ENCODE measurements at regions of chr16 and their contacts with region 1.

Region 1: DNA sequence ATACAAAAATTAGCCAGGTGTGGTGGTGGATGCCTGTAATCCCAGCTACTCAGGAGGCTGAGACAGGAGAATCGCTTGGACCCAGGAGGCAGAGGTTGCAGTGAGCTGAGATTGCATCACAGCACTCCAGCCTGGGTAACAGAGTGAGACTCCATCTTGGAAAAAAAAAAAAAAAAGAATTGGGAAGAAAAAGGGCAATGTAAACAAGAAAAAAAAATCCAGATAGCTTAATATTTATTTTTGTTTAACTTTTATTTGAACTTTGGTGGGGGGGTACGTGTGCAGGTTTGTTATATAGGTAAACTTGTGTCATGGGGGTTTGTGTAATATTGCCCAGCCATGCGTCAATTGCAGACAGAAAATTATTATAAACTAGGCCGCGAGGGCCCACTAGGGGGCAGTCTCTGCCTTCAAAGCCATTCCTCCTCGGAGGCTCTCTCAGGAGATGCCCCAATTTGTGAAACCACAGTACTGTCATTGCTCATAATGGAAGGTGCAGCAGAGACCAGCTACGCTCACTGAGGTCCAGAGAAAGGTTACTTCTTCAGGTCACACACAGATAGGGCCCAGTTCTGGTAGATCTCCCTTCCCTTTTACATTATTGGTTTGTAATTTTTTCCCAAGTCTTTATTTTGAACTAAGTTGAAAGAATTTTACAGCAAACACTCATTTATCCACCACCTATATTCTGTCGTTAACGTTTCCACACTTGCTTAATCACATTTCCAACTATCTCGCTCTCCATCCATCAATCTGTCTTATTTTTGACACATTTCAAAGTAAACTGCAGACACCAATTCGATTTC is 206.2 kb downstream of the PRKCB start:
- DNase-seq: peak; percentile 83
- ATAC-seq: peak; percentile 37
- H3K4me3 Mint-ChIP-seq: no peak overlapping the region
- H3K27ac Mint-ChIP-seq: no peak overlapping the region
- H3K4me1 Mint-ChIP-seq: peaks cover 21% of the 10 kb centered on the region
- H3K27me3 Mint-ChIP-seq: no peaks in the 10 kb centered on the region
- CTCF ChIP-seq: peak; percentile 79

Region 2: DNA sequence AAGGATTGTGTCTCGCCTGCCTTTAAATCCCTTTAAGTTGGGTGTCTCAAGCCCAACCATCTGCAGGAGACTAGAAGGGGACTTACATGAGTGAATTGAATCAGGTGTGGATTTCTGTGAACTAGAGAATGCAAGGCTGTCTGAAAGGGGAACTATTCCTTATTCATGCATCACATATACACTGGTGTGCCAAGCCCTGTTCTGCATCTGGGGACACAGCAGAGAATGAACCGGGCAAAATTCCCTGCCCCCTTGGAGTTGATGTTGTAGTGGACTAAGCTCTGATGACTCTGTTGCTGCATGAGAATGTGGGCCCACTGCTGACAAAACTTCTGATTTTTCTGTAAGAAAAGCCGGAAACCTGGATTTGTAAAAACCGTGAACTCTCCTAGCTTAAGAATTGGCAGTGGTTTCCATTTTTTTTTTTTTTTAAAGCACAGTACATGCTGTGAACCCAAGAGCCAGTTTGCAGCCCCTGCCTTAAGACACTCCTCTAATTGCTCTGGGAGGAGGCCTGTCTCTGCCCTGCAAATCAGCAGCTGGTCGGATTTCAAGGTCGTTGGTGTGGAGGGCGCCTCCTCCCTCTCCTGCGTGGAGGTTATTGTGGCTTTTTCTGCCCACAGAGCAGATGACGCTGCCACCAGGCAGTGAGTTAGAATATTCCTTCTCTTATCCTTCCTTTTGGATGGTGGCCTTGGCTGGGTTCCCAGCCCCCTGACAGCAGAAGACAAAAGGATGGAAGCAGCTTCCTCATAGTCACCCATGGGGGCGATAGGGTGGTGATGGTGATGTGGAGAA is 75.2 kb before region 1 on chr16:
- CTCF ChIA-PET with region 1: no interaction called
- POLR2A ChIA-PET with region 1: no interaction called
- DNase-seq: no peak
- ATAC-seq: no peak; the same call in 1 of the 2 replicates
- H3K4me3 Mint-ChIP-seq: no peak overlapping the region
- H3K27ac Mint-ChIP-seq: no peak overlapping the region
- H3K4me1 Mint-ChIP-seq: peaks cover 20% of the 10 kb centered on the region
- H3K27me3 Mint-ChIP-seq: peaks cover 9% of the 10 kb centered on the region
- CTCF ChIP-seq: no peak

Region 3: DNA sequence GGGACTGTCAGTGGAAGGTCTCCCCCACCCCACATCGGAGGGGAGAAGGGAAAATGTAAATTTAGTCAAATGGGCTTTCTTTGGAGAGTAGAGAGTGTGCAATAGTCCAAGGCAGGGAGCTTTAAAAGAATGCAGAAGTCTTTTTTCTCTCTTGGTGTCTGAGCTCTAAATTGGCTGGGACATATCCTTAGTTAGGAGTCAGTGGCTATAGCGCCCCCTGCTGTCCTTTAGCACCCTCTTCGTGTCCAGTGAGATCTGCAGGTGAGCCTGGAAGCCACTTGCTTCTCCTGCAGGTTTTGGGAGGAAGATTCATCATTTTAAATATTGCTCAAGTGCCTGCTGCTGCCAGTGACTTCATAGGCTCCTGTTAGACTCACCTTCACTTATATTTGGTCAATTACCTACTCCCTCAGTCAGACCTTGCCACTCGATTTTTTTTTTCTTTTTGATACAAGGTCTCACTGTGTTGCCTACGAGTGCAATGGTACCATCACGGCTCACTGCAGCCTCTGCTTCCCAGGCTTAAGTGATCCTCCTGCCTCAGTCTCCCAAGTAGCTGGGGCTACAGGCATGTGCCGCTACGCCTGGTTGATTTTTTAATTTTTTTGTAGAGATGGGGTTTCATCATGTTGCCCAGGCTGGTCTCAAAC is 31.5 kb before region 1 on chr16:
- CTCF ChIA-PET with region 1: interaction called, 23 read pairs
- POLR2A ChIA-PET with region 1: no interaction called
- DNase-seq: peak; percentile 81
- ATAC-seq: peak; percentile 87
- H3K4me3 Mint-ChIP-seq: no peak overlapping the region
- H3K27ac Mint-ChIP-seq: no peak overlapping the region
- H3K4me1 Mint-ChIP-seq: 0 out of 2 replicates have a peak, but pooled peaks cover 3% of the 10 kb centered on the region
- H3K27me3 Mint-ChIP-seq: peaks cover 6% of the 10 kb centered on the region; the same call in 1 of the 2 replicates
- CTCF ChIP-seq: peak; percentile 89

Region 4: GRCh38 chr16:24088767-24089166 is 46.7 kb after region 1 on chr16:
- CTCF ChIA-PET with region 1: no interaction called
- POLR2A ChIA-PET with region 1: no interaction called
- DNase-seq: no peak
- ATAC-seq: no peak
- H3K4me3 Mint-ChIP-seq: no peak overlapping the region
- H3K27ac Mint-ChIP-seq: no peak overlapping the region
- H3K4me1 Mint-ChIP-seq: peaks cover 9% of the 10 kb centered on the region
- H3K27me3 Mint-ChIP-seq: no peaks in the 10 kb centered on the region
- CTCF ChIP-seq: no peak

Region 5: GRCh38 chr16:24102209-24102660 is 60.2 kb after region 1 on chr16:
- CTCF ChIA-PET with region 1: interaction called, 11 read pairs
- POLR2A ChIA-PET with region 1: no interaction called
- DNase-seq: peak; percentile 28
- ATAC-seq: peak; percentile 54
- H3K4me3 Mint-ChIP-seq: no peak overlapping the region
- H3K27ac Mint-ChIP-seq: peak overlapping the region; percentile 45; the same call in 1 of the 2 replicates
- H3K4me1 Mint-ChIP-seq: peaks cover 61% of the 10 kb centered on the region
- H3K27me3 Mint-ChIP-seq: no peaks in the 10 kb centered on the region; the same call in 1 of the 2 replicates
- CTCF ChIP-seq: no peak

Region 6: GRCh38 chr16:24253192-24253591 is 211.2 kb after region 1 on chr16:
- CTCF ChIA-PET with region 1: interaction called, 122 read pairs
- POLR2A ChIA-PET with region 1: no interaction called
- DNase-seq: peak; percentile 58
- ATAC-seq: peak; percentile 76
- H3K4me3 Mint-ChIP-seq: no peak overlapping the region
- H3K27ac Mint-ChIP-seq: no peak overlapping the region
- H3K4me1 Mint-ChIP-seq: peaks cover 28% of the 10 kb centered on the region
- H3K27me3 Mint-ChIP-seq: peaks cover 40% of the 10 kb centered on the region
- CTCF ChIP-seq: peak; percentile 79

Region 7: DNA sequence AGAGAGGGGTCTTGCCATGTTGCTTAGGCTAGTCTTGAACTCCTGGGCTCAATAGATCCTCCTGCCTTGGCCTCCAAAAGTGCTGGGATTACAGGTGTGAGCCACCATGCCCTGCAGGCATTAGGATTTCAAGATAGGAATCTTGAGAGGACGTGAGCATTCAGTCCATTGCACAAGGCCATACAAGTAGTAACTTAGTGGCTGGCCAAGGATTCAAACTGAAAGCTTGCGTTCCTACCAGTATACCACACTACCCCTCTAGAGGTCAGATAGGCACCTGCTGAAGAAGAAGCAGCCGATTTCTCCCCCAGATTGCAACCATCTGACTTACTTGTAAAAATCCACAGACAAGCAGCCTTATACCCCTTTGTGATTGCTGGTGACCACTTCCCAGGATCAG is 295.0 kb after region 1 on chr16:
- CTCF ChIA-PET with region 1: interaction called, 11 read pairs
- POLR2A ChIA-PET with region 1: no interaction called
- DNase-seq: no peak
- ATAC-seq: no peak
- H3K4me3 Mint-ChIP-seq: no peak overlapping the region
- H3K27ac Mint-ChIP-seq: no peak overlapping the region
- H3K4me1 Mint-ChIP-seq: no peaks in the 10 kb centered on the region
- H3K27me3 Mint-ChIP-seq: no peaks in the 10 kb centered on the region
- CTCF ChIP-seq: no peak

Region 8: DNA sequence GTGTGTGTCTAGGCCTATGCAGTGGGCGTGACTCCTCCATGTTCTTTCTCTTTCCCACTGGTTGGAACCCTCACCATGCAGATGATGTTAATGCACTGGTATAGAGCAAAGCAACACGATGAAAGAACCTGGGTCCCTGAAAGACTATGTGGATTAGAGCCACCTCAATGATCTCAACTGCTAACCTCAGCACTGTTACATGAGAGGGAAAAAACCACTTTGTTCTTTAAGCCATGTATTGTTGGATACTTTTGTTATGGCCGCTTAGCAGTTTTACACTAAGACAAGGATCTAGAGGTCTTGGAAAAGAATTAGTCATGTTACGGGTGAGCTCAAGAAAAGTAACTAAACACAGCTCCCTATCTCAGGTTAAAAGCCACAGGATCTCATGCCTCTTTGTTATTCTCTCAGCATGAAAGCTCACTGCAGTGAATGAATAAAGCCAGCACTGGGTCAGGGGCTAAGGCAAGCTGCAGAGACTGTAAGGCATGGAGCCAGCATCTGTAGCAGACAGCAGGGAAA is 440.7 kb after region 1 on chr16:
- CTCF ChIA-PET with region 1: interaction called, 15 read pairs
- POLR2A ChIA-PET with region 1: no interaction called
- DNase-seq: peak; percentile 29
- ATAC-seq: peak; percentile 95
- H3K4me3 Mint-ChIP-seq: no peak overlapping the region; the same call in 1 of the 2 replicates
- H3K27ac Mint-ChIP-seq: no peak overlapping the region
- H3K4me1 Mint-ChIP-seq: peaks cover 18% of the 10 kb centered on the region
- H3K27me3 Mint-ChIP-seq: peaks cover 98% of the 10 kb centered on the region
- CTCF ChIP-seq: no peak

Measured in WTC11 (cell line).